Gastrocnemius medialis (tissue), 4 donors: ENCODE measurements at regions of chr1 and their contacts with region 1.

Region 1: DNA sequence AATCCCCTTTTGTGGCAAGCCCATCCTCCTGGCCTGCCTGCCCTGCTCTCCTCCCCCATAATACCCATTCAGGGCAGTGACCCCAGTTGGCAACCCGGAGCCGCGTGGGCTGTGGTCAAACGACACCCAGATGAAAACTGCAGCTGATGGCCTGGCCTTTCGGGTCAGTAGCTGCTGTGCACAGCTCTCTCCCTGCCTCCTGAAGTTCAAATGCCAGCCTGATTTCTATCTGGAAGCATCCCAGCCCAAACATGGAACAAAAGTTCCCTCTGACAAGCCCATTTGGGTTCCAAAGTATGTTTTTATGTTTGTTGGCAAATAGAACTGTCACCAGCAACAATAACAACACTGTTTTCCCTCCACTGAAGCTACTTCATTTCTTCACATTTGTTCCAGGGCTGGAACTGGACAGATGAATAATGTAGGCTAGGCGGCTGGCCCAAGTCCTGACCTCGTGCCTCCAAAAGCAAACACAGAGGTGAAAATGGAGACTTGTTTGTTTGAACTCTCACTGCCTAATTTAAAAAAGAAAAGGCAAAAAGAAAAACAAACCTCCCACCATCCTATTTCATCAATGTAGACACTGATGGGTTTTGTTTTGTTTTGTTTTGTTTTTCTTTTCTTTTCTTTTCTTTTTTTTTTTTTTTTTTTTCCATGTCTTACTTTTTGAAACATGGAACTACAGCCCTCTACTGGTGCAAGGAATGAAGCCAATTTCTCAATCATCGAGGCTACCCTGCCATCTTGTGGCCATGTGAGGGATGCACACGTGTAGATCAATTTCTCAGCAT is 179.0 kb downstream of the ADSS2 start:
- DNase-seq: peak; percentile 32 to 70
- ATAC-seq: peak; percentile 90 to 91
- H3K4me3 ChIP-seq: no peak overlapping the region
- H3K27ac ChIP-seq: peak overlapping the region; percentile 2 to 56 (median 36)
- H3K4me1 ChIP-seq: peaks cover 0 to 5% of the 10 kb centered on the region in 2 donors
- H3K27me3 ChIP-seq: no peaks in the 10 kb centered on the region
- CTCF ChIP-seq: peak; percentile 88 to 97 (median 90)
- POLR2A ChIP-seq: no peak

Region 2: DNA sequence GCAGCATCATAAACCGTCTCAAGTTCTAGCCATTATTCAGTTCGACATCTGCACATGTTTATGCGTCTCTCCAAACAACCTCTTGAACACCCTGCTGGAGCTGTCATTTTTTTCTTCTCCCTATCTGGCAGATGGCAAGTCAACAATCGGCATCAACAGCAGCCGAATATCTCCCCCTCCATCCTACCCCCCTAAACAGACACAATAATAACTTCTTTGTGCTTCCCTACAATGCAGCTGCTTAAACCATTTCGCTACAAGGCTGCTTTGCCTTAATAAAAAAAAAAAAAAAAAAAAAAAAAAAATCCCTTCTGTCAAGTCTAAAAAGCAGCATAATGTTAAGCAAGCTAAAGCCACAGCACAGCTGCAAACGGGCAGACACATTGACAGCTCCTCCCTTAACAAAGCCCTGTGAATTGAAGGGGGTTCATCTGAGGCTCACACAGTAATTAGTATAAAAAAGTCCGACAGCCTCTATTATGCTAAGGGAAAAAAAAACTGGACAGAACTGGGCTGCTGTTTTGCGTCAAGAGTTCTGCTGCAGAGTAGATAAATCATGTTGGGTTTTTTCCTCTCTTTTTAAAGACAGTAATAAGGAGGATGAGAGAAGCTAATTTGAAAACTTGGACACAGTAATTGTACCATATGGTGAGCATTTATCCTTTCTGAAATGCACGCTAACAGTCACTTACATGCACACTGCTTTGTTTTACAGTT is 559.0 kb before region 1 on chr1:
- in situ Hi-C with region 1: loop called in 1 of 4 experiments (anchors 25 kb)
- intact Hi-C with region 1: no loop called
- DNase-seq: no peak
- ATAC-seq: peak; percentile 33 to 63
- H3K4me3 ChIP-seq: peak overlapping the region in 1 of 4 donors; percentile 3
- H3K27ac ChIP-seq: no peak overlapping the region
- H3K4me1 ChIP-seq: peaks cover 13 to 27% of the 10 kb centered on the region in 2 donors
- H3K27me3 ChIP-seq: no peaks in the 10 kb centered on the region
- CTCF ChIP-seq: no peak
- POLR2A ChIP-seq: no peak

Region 3: DNA sequence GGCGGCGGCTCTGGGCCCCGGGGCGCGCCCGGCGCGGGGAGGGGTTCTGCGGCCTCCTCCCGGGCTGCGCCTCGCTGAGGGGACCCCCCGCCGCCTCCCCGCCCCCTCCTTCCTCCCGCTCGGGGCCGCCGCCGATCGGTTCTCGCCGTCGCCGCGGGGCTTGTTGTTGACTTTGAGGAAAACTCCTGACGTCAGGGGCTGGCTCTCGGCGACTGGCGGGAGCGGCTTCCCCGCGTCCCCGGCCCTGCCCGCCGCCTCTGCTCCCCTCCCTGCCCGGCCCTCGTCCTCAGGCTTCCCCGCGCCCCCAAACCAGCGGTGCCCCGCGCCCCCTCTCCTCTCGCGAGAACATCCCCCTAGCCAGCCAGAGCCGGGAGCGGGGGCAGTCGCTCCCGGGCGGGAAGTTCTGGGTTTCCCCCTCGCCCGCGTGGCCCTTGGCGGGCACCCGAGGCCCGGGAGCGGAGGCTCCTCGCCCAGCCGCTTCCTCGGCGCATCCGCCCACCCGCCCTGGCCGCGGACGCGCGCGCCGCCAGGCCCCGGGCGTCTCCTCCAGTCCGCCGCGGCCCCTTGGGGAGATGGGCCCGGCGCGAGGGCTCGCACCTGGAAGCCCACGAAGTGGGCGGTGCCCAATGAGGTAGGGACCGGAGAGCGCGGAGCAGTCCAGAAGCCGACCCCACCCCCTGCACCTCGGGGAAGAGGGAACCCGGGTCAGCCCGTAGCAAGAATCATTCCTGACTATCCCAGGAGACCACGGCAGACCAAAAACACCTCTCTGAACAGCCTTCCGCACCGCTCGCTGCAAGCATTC is 422.0 kb before region 1 on chr1:
- in situ Hi-C with region 1: no loop called
- intact Hi-C with region 1: loop called (anchors 10 kb)
- DNase-seq: peak; percentile 15 to 50
- ATAC-seq: peak; percentile 59 to 65
- H3K4me3 ChIP-seq: peak overlapping the region; percentile 71 to 81 (median 78)
- H3K27ac ChIP-seq: peak overlapping the region; percentile 80 to 91 (median 88)
- H3K4me1 ChIP-seq: no peaks in the 10 kb centered on the region
- H3K27me3 ChIP-seq: peaks cover 0 to 34% (median 10%) of the 10 kb centered on the region in 3 donors
- CTCF ChIP-seq: no peak
- POLR2A ChIP-seq: peak; percentile 40 to 80

Region 4: GRCh38 chr1:244047621-244048471 is 224.8 kb before region 1 on chr1:
- in situ Hi-C with region 1: no loop called
- intact Hi-C with region 1: loop called (anchors 5 kb)
- DNase-seq: peak; percentile 99
- ATAC-seq: peak; percentile 76 to 81
- H3K4me3 ChIP-seq: peak overlapping the region; percentile 75 to 92 (median 81)
- H3K27ac ChIP-seq: peak overlapping the region; percentile 90 to 98 (median 96)
- H3K4me1 ChIP-seq: peaks cover 27 to 39% of the 10 kb centered on the region in 2 donors
- H3K27me3 ChIP-seq: no peaks in the 10 kb centered on the region
- CTCF ChIP-seq: peak in 1 of 5 experiments; percentile 13
- POLR2A ChIP-seq: peak; percentile 96 to 98

Region 5: DNA sequence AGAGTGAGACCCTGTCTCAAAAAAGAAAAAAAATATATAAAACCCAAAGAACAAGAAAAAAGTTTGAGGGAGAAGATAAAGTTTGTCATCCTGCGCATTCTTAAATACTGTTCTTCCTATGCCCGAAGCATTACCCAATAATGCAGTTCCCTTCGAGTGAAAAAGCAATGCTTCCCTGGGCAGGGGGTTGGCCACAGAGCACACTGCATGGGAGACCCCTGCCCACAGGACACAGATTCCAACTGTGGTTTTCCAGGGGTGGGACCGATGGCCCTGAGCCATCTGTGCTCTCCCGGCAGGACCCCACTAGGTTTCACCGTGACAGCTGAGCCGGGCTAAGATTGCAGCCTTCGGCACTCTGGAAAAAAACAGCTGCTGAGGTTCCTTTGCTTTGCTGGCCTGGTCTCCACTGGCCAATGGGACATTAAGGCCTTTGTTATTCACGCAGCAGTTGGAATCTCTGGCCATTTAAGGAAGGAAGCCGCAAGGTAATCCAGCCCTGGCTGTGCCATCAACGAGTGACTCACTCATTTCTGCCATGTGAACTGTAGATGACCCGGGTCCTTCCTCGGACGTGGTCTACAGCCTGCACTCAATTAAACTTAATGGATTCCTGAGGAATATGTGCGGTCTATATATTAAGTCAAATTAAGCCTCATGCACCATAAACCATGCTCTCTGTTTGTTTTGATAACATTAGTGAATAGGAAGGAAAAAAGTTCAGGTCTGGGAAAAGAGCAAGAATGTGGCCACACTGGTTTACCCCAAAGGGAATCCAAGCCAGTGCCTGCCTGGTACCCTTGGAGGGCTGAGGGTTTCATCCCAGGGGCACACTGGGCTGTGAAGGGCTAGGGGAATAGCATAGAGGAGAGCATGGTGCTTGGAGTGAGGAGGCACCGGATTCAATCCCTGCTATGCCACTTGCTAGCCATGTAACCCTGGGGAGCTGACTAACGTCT is 58.4 kb before region 1 on chr1:
- in situ Hi-C with region 1: no loop called
- intact Hi-C with region 1: loop called (anchors 5 kb)
- DNase-seq: peak; percentile 79 to 84
- ATAC-seq: peak; percentile 90 to 96
- H3K4me3 ChIP-seq: peak overlapping the region in 2 of 4 donors; percentile 31 to 36
- H3K27ac ChIP-seq: peak overlapping the region; percentile 73 to 86 (median 77)
- H3K4me1 ChIP-seq: peaks cover 29 to 42% of the 10 kb centered on the region in 2 donors
- H3K27me3 ChIP-seq: no peaks in the 10 kb centered on the region
- CTCF ChIP-seq: no peak
- POLR2A ChIP-seq: peak in 1 of 2 donors; percentile 45